ENCODE measurements at regions of chr2 and their contacts with region 1.

Region 1: DNA sequence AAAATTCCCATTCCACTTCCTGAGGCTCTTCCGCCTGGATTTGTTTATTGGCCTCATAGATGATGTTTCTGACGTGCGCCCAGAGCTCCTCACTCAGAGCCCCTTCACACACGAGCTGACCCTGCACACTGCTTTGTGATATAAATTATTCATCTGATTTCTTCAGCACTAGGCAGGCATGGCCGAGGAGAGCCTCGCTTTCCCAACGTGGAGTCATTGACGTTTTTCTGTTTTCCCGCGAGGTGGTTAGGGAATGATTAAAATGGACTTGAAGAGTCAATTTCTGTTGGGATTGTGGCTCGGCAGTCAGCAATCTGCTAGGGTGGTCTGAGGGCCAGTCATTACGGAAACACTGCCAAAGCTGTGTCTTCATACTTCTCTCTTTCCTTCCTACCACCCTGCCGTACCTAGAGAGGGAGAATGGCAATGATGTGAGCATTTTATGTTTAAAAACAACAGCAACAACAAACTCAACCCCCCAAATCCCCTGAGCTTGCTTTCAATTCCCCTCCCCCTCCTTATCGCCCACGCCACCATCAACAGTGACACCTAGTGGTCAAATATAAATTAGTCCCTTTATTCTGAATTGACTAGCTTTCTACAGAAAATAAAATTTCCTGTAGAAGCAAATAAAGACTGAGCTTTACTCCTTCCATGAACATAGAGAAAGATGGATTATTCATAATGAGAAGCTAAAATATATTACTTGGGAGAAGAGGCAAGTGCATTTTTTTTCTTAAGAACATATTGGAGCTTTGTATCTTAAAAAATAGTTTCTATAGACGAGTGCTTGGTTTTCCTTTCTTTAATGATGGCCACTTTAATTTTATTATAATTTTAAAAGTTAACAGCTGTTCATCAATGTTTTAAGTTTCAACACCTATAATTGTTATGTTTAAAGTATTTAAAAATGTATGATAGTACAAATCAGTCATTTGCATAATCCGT is 285.1 kb downstream of the MTX2 start:
- DNase-seq: peak; percentile 61 to 69
- ATAC-seq: peak; percentile 77 to 79
- H3K4me3 ChIP-seq: peak overlapping the region; percentile 46
- H3K27ac ChIP-seq: peak overlapping the region; percentile 77 to 90
- H3K4me1 ChIP-seq: no peaks in the 10 kb centered on the region
- CTCF ChIP-seq: peak; percentile 84
- EP300 ChIP-seq: no peak
- POLR2A ChIP-seq: no peak
- RAD21 ChIP-seq: peak; percentile 79 to 81

Region 2: GRCh38 chr2:175647058-175647457 is 907.3 kb before region 1 on chr2:
- CTCF ChIA-PET with region 1: no interaction called
- POLR2A ChIA-PET with region 1: no interaction called
- DNase-seq: no peak
- ATAC-seq: no peak
- H3K4me3 ChIP-seq: no peak overlapping the region
- H3K27ac ChIP-seq: no peak overlapping the region
- H3K4me1 ChIP-seq: no peaks in the 10 kb centered on the region
- CTCF ChIP-seq: no peak
- EP300 ChIP-seq: no peak
- POLR2A ChIP-seq: no peak
- RAD21 ChIP-seq: no peak

Region 3: GRCh38 chr2:176565641-176566323 is 11.4 kb after region 1 on chr2:
- CTCF ChIA-PET with region 1: interaction called, 26 read pairs
- POLR2A ChIA-PET with region 1: no interaction called
- DNase-seq: no peak
- ATAC-seq: no peak
- H3K4me3 ChIP-seq: no peak overlapping the region
- H3K27ac ChIP-seq: no peak overlapping the region
- H3K4me1 ChIP-seq: peaks cover 25% of the 10 kb centered on the region
- CTCF ChIP-seq: no peak
- EP300 ChIP-seq: no peak
- POLR2A ChIP-seq: no peak
- RAD21 ChIP-seq: no peak

Region 4: DNA sequence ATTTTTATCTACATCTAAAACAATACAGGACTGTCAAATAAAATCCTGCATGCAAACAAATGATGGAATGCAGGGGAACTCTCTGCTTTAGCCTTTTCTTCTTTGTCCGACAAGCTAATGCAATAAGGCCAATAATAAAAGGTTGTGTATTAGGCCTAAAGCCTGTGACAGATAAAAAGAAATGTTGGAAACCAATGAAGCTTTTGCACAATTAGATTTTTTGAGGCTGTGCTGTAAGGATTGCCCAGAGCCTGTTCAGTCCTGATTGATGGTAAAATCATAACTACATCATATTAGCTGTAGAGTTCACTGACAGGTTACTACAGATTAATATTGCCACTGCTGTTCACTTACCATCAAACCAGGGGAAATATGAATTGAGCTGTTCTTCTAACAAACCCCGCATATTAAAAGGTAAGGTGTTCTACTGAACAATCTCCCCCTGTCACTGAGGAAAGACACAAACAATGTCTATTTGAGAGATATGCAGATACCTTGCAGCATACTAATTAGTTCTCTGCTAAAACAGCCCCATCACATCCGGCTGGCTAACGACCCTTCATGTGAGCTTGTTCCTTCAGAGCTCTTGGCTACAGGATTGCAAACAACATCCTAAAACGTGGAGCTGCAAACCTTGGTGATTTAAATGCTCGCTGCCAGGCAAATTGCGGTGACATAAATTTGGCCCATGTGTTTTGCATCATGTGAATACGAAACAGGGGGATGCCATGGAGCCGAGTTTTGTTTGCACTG is 20.3 kb after region 1 on chr2:
- CTCF ChIA-PET with region 1: interaction called, 18 read pairs
- POLR2A ChIA-PET with region 1: no interaction called
- DNase-seq: no peak
- ATAC-seq: no peak
- H3K4me3 ChIP-seq: no peak overlapping the region
- H3K27ac ChIP-seq: no peak overlapping the region
- H3K4me1 ChIP-seq: no peaks in the 10 kb centered on the region
- CTCF ChIP-seq: no peak
- EP300 ChIP-seq: no peak
- POLR2A ChIP-seq: no peak
- RAD21 ChIP-seq: no peak

Region 5: DNA sequence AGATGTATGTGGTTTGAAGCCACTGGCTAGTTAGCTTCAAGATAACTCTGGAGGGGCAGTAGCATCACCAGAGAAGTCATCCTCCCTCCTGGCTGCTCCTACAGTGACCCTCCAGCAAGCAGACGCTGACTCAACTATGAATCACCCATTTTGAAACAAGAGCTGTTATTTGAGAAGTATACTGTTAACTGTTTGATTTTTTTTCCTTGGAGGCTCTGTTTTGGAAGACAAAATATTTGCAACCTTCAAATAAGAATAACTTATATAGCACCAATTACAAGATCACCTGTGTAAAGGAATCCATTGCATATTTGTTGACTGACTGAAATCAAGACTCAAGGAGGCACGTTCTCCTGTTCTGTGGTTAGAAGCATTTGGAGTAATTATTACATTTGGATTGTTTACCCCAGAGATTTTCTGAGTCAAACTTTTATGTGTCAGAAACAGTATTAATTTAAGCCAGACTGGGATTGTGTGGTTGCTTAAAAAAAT is 28.7 kb after region 1 on chr2:
- CTCF ChIA-PET with region 1: interaction called, 18 read pairs
- POLR2A ChIA-PET with region 1: interaction called, 8 read pairs
- DNase-seq: peak; percentile 49 to 87
- ATAC-seq: peak; percentile 95 to 97
- H3K4me3 ChIP-seq: peak overlapping the region; percentile 17; the same call in 1 of the 3 replicates
- H3K27ac ChIP-seq: peak overlapping the region; percentile 72 to 76
- H3K4me1 ChIP-seq: peaks cover 31% of the 10 kb centered on the region
- CTCF ChIP-seq: no peak
- EP300 ChIP-seq: no peak
- POLR2A ChIP-seq: no peak
- RAD21 ChIP-seq: peak in 1 of 2 experiments; percentile 23; a peak in 2 of 5 replicates